Activated CD8-positive, alpha-beta T cell treated with anti-CD3 and anti-CD28 coated beads for 36 hours (primary cell): ENCODE measurements at regions of chr1 and their contacts with region 1.

Region 1: DNA sequence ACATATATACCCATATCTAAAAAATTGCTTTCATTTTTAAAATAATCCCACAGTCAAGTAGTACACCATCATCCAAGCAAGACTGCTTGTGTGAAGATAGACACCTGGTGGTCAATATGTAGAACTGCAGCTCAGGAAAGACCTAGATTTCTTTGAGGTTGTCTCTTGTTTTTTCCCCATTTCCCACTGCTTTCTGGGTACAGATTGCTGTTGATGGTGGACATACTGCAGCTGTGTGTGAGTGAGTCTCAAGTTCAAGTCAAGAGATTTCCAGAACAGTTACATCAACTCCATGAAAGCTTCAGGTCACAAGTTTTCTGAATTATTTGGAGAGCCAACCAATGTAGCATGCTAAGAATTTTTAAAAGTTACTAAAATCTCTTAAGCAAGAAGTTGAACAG is 306.4 kb downstream of the DUSP10 start:
- DNase-seq: no peak
- ATAC-seq: peak; percentile 32
- H3K4me3 Mint-ChIP-seq: no peak overlapping the region
- H3K27ac Mint-ChIP-seq: no peak overlapping the region
- H3K4me1 Mint-ChIP-seq: peaks cover 36% of the 10 kb centered on the region
- H3K27me3 Mint-ChIP-seq: peaks cover 6% of the 10 kb centered on the region
- CTCF ChIP-seq: peak; percentile 92

Region 2: DNA sequence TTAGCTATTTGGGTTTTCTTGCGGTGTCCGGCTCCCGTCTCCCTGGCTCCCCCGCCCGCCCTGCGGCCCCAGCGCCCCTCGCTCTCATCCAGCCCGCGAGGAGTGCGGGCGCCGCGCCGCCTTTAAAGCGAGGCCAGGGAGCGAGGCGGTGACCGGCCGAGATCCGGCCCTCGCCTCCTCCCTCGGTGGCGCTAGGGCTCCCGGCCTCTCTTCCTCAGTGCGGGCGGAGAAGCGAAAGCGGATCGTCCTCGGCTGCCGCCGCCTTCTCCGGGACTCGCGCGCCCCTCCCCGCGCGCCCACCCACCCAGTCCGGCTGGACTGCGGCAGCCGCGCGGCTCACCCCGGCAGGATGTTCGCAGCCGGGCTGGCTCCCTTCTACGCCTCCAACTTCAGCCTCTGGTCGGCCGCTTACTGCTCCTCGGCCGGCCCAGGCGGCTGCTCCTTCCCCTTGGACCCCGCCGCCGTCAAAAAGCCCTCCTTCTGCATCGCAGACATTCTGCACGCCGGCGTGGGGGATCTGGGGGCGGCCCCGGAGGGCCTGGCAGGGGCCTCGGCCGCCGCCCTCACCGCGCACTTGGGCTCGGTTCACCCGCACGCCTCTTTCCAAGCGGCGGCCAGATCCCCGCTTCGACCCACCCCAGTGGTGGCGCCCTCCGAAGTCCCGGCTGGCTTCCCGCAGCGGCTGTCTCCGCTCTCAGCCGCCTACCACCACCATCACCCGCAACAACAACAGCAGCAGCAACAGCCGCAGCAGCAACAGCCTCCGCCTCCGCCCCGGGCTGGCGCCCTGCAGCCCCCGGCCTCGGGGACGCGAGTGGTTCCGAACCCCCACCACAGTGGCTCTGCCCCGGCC is 555.8 kb before region 1 on chr1:
- CTCF ChIA-PET with region 1: interaction called, 7 read pairs
- POLR2A ChIA-PET with region 1: no interaction called
- intact Hi-C with region 1: loop called (anchors 5 kb)
- DNase-seq: peak; percentile 17
- ATAC-seq: no peak
- H3K4me3 Mint-ChIP-seq: peak overlapping the region; percentile 62
- H3K27ac Mint-ChIP-seq: no peak overlapping the region
- H3K4me1 Mint-ChIP-seq: peaks cover 31% of the 10 kb centered on the region
- H3K27me3 Mint-ChIP-seq: peaks cover 78% of the 10 kb centered on the region
- CTCF ChIP-seq: no peak

Region 3: GRCh38 chr1:221263831-221264767 is 171.4 kb before region 1 on chr1:
- CTCF ChIA-PET with region 1: interaction called, 47 read pairs
- POLR2A ChIA-PET with region 1: interaction called, 8 read pairs
- intact Hi-C with region 1: loop called (anchors 10 kb)
- DNase-seq: peak; percentile 64
- ATAC-seq: peak; percentile 68
- H3K4me3 Mint-ChIP-seq: no peak overlapping the region
- H3K27ac Mint-ChIP-seq: no peak overlapping the region
- H3K4me1 Mint-ChIP-seq: no peaks in the 10 kb centered on the region
- H3K27me3 Mint-ChIP-seq: peaks cover 2% of the 10 kb centered on the region
- CTCF ChIP-seq: peak; percentile 35

Region 4: GRCh38 chr1:221276896-221277295 is 158.6 kb before region 1 on chr1:
- CTCF ChIA-PET with region 1: interaction called, 10 read pairs
- POLR2A ChIA-PET with region 1: no interaction called
- intact Hi-C with region 1: no loop called
- DNase-seq: no peak
- ATAC-seq: peak; percentile 17
- H3K4me3 Mint-ChIP-seq: no peak overlapping the region
- H3K27ac Mint-ChIP-seq: no peak overlapping the region
- H3K4me1 Mint-ChIP-seq: no peaks in the 10 kb centered on the region
- H3K27me3 Mint-ChIP-seq: peaks cover 8% of the 10 kb centered on the region
- CTCF ChIP-seq: no peak

Region 5: GRCh38 chr1:221448585-221449175 is 13.2 kb after region 1 on chr1:
- CTCF ChIA-PET with region 1: interaction called, 11 read pairs
- POLR2A ChIA-PET with region 1: interaction called, 3 read pairs
- intact Hi-C with region 1: no loop called
- DNase-seq: no peak
- ATAC-seq: no peak
- H3K4me3 Mint-ChIP-seq: no peak overlapping the region
- H3K27ac Mint-ChIP-seq: no peak overlapping the region
- H3K4me1 Mint-ChIP-seq: peaks cover 18% of the 10 kb centered on the region
- H3K27me3 Mint-ChIP-seq: peaks cover 27% of the 10 kb centered on the region
- CTCF ChIP-seq: no peak

Region 6: DNA sequence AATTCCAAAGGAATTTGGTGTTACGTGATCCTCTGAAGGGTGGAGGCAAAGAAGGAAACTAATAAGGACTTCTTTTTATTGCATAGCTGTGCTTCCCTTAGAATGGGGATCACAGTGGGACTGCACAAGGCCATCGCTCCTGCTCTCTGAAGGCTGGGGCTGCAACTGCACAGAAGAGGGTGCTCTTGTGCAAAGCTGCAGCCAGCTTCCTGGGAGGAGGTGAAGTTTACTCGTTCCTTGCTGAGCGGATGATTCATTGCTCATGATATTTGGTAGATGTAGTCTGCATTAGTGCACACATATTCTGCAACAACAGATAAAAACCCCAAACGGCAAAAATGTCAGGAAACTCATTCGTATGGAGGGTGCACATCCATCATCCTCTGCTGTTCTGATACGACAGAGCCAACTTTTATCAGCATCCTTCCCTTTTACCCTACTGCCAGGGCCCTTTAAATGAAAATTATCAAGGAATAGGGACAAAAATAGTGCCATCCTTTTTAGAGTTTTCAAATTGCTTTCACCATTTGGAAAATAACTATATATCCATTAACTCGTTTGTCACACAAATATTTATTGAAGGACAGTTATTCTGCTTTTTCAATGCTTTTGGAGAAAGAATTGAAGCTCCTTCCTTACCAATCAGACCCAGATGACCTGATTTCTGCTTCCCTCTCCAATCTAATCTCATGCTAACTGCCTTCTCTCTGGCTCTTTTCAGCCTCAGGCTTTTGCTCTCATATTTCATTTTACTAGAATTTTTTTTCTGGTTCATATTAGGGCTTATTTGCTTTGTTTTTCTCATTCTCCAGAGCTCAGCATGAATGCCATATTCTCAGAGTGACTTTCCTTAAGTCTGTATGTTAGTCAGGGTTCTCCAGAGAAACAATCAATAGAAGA is 42.8 kb after region 1 on chr1:
- CTCF ChIA-PET with region 1: interaction called, 13 read pairs
- POLR2A ChIA-PET with region 1: interaction called, 3 read pairs
- intact Hi-C with region 1: no loop called
- DNase-seq: peak; percentile 67
- ATAC-seq: peak; percentile 100
- H3K4me3 Mint-ChIP-seq: no peak overlapping the region
- H3K27ac Mint-ChIP-seq: no peak overlapping the region
- H3K4me1 Mint-ChIP-seq: no peaks in the 10 kb centered on the region
- H3K27me3 Mint-ChIP-seq: peaks cover 7% of the 10 kb centered on the region
- CTCF ChIP-seq: peak; percentile 59

Region 7: GRCh38 chr1:221708987-221709386 is 273.5 kb after region 1 on chr1:
- CTCF ChIA-PET with region 1: no interaction called
- POLR2A ChIA-PET with region 1: no interaction called
- intact Hi-C with region 1: loop called (anchors 10 kb)
- DNase-seq: peak; percentile 61
- ATAC-seq: no peak
- H3K4me3 Mint-ChIP-seq: no peak overlapping the region
- H3K27ac Mint-ChIP-seq: peak overlapping the region; percentile 90
- H3K4me1 Mint-ChIP-seq: peaks cover 63% of the 10 kb centered on the region
- H3K27me3 Mint-ChIP-seq: no peaks in the 10 kb centered on the region
- CTCF ChIP-seq: no peak